Heart left ventricle (tissue), 16 donors: ENCODE measurements at regions of chr22 and their contacts with region 1.

Region 1: DNA sequence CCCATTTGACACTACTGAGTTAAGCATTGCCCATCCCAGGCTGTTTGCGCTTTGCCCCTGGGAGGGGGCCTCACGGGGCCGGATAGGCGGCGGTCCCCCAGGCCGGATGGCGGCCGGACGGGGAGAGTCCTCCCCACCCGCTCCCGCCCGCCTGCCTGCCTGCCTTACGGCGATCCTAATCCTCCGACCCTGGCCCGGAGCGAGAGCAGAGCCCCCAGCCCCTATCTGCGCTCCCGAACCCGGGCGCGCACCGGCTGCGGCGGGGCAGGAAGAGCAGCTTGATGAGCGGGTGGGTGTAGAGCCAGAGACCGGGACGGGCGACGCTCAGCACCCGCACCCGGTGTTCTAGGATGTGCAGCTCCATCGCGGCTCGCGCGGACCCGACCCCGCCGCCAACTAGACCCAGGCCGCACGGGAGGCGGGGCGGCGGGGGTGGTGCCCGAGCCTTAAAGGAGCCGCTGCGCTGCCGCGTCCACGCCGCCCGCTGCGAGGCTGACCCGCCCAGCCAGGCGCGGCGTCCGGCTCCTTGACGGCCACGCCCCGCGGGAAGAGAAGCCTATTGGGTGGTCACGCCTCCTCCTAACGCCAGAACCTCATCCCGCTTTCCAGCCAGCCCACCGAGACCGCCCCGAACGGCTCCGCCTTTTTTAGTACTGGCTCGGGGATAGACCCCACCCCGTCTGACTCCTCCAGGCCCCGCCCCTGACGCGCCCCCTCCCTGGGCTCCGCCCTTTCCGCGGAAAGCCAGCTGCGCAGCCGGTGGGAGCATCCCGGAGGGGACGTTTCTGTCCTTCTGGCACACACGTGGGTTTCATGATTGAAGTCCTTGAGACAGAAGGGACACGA is at the start of gene CASTOR1:
- DNase-seq: peak; percentile 99 to 100 (median 99)
- ATAC-seq: peak; percentile 85 to 91 (median 90)
- H3K4me3 ChIP-seq: peak within 1 kb of the TSS; percentile 62 to 99 (median 87)
- H3K27ac ChIP-seq: peak within 1 kb of the TSS; percentile 84 to 98 (median 95)
- H3K4me1 ChIP-seq: peaks cover 12 to 45% (median 37%) of the 10 kb centered on the region in 12 donors
- H3K27me3 ChIP-seq: no peaks in the 10 kb centered on the region
- CTCF ChIP-seq: peak in 1 of 12 donors; percentile 7
- POLR2A ChIP-seq: peak; percentile 68 to 87
- total RNA-seq, gene CASTOR1: 3.8 to 16.6 (median 7.1) TPM

Region 2: GRCh38 chr22:30089655-30089974 is 199.7 kb before region 1 on chr22:
- intact Hi-C with region 1: no loop called
- DNase-seq: no peak
- ATAC-seq: no peak
- H3K4me3 ChIP-seq: no peak overlapping the region
- H3K27ac ChIP-seq: no peak overlapping the region
- H3K4me1 ChIP-seq: peaks cover 0 to 7% (median 0%) of the 10 kb centered on the region in 12 donors
- H3K27me3 ChIP-seq: peaks cover 0 to 18% (median 0%) of the 10 kb centered on the region in 9 donors
- CTCF ChIP-seq: no peak
- POLR2A ChIP-seq: no peak

Region 3: DNA sequence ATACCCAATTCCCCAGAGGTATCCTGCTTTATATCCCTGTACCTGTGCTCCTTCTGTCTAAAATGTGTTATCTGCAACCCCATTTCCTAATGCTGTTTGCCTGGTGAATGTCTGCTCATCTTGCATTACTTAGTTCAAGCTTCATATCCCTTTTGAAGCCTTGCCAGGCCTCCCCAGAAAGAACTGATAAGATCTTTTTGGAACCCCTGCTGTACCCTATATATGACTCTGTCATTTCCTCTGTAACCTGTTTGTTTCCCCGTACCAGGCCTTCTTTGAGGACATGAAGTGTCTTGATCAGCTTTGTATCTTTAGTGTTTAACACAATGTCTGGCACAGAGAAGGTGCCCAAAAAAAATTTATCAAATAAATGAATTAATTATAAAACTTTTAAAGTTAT is 120.4 kb before region 1 on chr22:
- intact Hi-C with region 1: no loop called
- DNase-seq: no peak
- ATAC-seq: no peak
- H3K4me3 ChIP-seq: no peak overlapping the region
- H3K27ac ChIP-seq: no peak overlapping the region
- H3K4me1 ChIP-seq: no peaks in the 10 kb centered on the region
- H3K27me3 ChIP-seq: peaks cover 0 to 66% (median 5%) of the 10 kb centered on the region in 9 donors
- CTCF ChIP-seq: no peak
- POLR2A ChIP-seq: no peak

Region 4: DNA sequence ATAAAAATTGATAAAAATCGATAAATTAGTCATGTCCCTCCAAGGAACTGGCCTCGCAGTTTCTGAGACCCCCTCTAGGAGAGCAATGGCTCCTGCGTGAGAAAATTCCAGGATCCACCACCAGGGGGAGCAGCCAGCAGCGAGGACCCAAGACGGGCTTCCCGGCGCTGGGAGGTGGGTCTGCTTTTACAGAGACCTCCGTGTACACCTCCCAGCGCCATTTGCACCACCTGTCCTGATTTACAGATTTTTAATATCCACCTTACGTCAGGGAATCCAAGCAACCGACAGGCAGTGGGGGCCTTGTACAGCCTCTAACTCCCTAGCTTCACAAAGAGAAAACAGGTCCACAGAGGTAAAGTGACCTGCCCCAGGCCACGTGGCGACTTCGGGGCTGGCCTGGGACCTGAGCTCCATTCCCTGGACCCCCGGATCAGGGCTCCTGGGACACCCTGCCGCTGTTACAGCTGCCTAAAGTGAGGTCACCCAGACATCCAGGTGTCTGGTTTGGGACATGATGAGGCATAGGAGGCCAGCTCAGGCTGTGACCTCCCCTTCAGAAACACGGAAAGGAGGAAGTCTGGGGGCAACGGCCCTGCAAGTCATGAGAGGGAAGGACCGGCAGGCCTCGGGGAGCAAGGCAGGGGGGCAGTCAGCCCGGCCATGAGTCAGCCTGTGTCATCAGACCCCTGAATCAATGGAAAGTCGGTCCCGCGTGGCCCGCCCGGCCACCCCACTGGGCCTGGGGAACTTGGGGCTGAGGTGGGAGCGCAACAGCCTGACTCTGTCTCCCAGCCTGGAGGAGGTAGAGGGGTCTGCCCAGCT is 26.2 kb before region 1 on chr22:
- intact Hi-C with region 1: loop called in 2 of 10 experiments (anchors 2 kb)
- DNase-seq: peak; percentile 68 to 87 (median 72)
- ATAC-seq: peak in 2 of 4 donors; percentile 49 to 53
- H3K4me3 ChIP-seq: peak overlapping the region in 6 of 12 donors; percentile 3 to 32 (median 11)
- H3K27ac ChIP-seq: peak overlapping the region in 1 of 12 donors; percentile 32
- H3K4me1 ChIP-seq: peaks cover 0 to 43% (median 0%) of the 10 kb centered on the region in 12 donors
- H3K27me3 ChIP-seq: peaks cover 0 to 12% (median 0%) of the 10 kb centered on the region in 9 donors
- CTCF ChIP-seq: peak; percentile 89 to 99 (median 97)
- POLR2A ChIP-seq: no peak

Region 5: DNA sequence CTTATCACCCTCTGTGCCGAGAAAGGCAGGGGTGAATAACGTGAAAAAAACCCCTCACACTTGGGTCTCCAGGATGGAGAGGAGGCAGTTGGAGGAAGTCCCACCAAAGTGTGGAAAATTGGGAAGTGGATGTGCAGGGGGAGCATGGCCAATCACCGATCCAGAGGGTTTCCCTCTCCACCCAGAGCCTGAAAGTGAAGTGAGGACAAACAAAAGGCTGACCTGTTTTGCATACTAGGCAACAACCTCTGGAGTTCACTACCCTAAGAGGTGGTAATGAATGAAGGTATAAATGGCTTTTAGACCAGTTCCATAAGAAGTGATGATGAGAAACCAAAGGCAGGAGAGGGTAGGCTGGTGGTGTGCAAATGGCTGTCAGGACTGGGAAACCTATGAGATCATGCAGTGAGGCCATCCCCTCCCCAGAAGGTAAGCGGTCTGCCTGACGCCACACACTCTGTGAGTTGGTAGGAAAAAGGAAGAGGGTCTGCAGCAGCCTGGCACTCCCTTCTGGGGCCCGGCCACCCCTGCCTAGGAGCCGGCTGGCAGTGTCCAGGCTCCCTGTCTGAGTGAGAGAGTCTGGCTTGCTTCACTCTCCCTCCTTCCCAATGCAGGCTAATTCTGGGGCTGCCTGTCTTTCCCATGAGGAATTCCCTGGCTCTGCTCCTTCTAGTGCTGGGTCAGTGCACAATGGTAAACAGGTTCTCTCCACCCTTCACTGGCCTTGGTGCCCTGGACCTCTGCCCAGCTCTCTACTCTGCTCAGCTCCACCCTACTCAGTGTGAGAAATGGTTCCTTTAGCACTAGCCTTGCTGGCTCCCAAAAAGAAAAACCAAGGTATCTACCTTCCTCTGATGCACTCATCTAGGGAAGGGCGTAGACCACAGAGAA is 21.8 kb after region 1 on chr22:
- intact Hi-C with region 1: loop called in 2 of 10 experiments (anchors 1 kb)
- DNase-seq: peak; percentile 79 to 89 (median 84)
- ATAC-seq: peak; percentile 89 to 95 (median 94)
- H3K4me3 ChIP-seq: peak overlapping the region in 4 of 12 donors; percentile 4 to 16 (median 8)
- H3K27ac ChIP-seq: peak overlapping the region; percentile 38 to 84 (median 72)
- H3K4me1 ChIP-seq: peaks cover 22 to 100% (median 73%) of the 10 kb centered on the region in 12 donors
- H3K27me3 ChIP-seq: no peaks in the 10 kb centered on the region
- CTCF ChIP-seq: no peak
- POLR2A ChIP-seq: peak in 1 of 2 donors; percentile 40

Region 6: GRCh38 chr22:30340911-30341685 is 51.7 kb after region 1 on chr22:
- intact Hi-C with region 1: loop called in 1 of 10 experiments (anchors 5 kb)
- DNase-seq: peak; percentile 72 to 87 (median 82)
- ATAC-seq: peak; percentile 88 to 91 (median 90)
- H3K4me3 ChIP-seq: no peak overlapping the region
- H3K27ac ChIP-seq: peak overlapping the region in 8 of 12 donors; percentile 21 to 70 (median 58)
- H3K4me1 ChIP-seq: peaks cover 0 to 50% (median 23%) of the 10 kb centered on the region in 12 donors
- H3K27me3 ChIP-seq: no peaks in the 10 kb centered on the region
- CTCF ChIP-seq: no peak
- POLR2A ChIP-seq: no peak

Region 7: GRCh38 chr22:30423982-30424963 is 134.9 kb after region 1 on chr22:
- intact Hi-C with region 1: loop called in 1 of 10 experiments (anchors 1 kb)
- DNase-seq: peak; percentile 99 to 100 (median 99)
- ATAC-seq: peak; percentile 90 to 96 (median 94)
- H3K4me3 ChIP-seq: peak overlapping the region; percentile 41 to 88 (median 71)
- H3K27ac ChIP-seq: peak overlapping the region; percentile 87 to 99 (median 96)
- H3K4me1 ChIP-seq: peaks cover 4 to 54% (median 33%) of the 10 kb centered on the region in 12 donors
- H3K27me3 ChIP-seq: no peaks in the 10 kb centered on the region
- CTCF ChIP-seq: no peak
- POLR2A ChIP-seq: peak in 1 of 2 donors; percentile 58